ENCODE measurements at regions of chr1 and their contacts with region 1.

Region 1: DNA sequence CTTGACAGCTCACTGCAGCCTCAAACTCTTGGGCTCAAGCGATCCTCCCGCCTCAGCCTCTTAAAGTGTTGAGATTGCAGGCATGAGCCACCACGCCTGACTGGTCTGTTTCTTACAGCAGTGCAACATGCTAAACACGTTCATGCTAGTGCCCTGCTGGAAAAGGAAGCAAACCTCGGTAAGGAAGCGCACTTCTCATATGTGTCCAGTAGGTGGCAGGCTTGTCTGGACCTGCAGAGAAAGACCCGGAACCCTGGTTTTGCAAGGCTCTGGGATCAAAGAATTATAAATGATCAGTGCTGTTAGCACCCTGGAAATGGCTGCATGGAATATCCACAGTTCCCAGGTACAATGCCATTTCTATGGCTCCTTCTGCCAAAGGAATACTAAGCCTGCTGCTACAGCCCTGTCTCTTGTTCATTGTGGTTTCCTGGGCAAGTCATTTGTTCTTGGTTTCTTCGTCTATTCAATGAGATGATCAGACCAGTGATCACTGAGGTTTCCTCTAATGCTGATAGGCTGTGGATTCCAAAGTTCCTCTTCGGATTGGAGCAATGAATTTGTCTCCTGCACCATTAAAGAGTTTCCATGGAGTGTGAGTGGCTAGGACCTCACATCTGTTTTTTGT is 15.9 kb downstream of the RNU5D-1 start:
- DNase-seq: peak in 1 of 2 experiments; percentile 82
- H3K4me3 ChIP-seq: no peak overlapping the region
- H3K27ac ChIP-seq: no peak overlapping the region
- H3K4me1 ChIP-seq: no peaks in the 10 kb centered on the region
- H3K27me3 ChIP-seq: no peaks in the 10 kb centered on the region
- CTCF ChIP-seq: peak; percentile 81 to 97 (median 81)
- EP300 ChIP-seq: no peak
- POLR2A ChIP-seq: no peak
- RAD21 ChIP-seq: peak; percentile 69 to 79

Region 2: DNA sequence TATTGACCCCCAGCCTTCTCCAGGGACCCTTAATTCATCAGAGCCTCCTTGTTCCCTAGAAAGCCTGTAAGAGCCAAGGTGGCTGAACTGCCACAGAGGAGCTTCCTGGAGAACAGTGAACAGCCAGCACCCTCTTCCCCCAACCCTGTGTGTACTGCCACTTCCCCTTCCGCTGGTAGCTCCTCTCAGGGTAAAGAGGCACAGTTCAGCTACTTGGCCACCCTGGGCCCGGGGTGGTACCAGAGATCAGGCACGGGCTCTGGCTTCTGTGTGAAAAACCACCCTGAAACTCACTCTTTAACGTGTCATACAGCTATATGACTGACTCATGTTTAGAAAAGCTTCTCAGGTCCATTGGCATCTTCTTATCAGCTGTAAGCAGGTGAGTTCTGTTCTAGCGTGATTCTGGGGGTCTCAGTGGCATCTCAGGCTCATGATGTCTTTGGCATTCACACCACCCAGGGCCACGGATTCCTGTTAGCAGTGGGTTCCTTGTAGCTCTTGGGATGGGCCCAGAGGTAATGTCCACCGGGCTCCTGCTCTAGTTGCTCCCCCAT is 18.2 kb before region 1 on chr1:
- CTCF ChIA-PET with region 1: interaction called, 25 read pairs
- POLR2A ChIA-PET with region 1: no interaction called
- DNase-seq: no peak
- H3K4me3 ChIP-seq: no peak overlapping the region
- H3K27ac ChIP-seq: no peak overlapping the region
- H3K4me1 ChIP-seq: no peaks in the 10 kb centered on the region
- H3K27me3 ChIP-seq: no peaks in the 10 kb centered on the region
- CTCF ChIP-seq: no peak
- EP300 ChIP-seq: no peak
- POLR2A ChIP-seq: no peak
- RAD21 ChIP-seq: no peak

Region 3: GRCh38 chr1:44730741-44731512 is 15.9 kb after region 1 on chr1 and contains the start of gene RNU5D-1:
- CTCF ChIA-PET with region 1: interaction called, 107 read pairs
- POLR2A ChIA-PET with region 1: interaction called, 213 read pairs
- DNase-seq: peak in 1 of 2 experiments; percentile 94
- H3K4me3 ChIP-seq: peak within 1 kb of the TSS in 1 of 4 experiments; percentile 31; a peak in 1 of 8 replicates
- H3K27ac ChIP-seq: peak within 1 kb of the TSS; percentile 94
- H3K4me1 ChIP-seq: peaks cover 0 to 3% (median under 1%) of the 10 kb centered on the region in 4 experiments; a peak in 4 of 7 replicates
- H3K27me3 ChIP-seq: no peaks in the 10 kb centered on the region
- CTCF ChIP-seq: peak; percentile 48 to 80 (median 55)
- EP300 ChIP-seq: 0 out of 3 replicates have a peak, but pooled peaks of 1 of the 2 experiments have one; percentile 30
- POLR2A ChIP-seq: peak; percentile 99
- RAD21 ChIP-seq: peak; percentile 14 to 32; a peak in 1 of 4 replicates
- total RNA-seq, gene RNU5D-1: 17.4 TPM in 1 of 2 replicates, not detected in the other

Region 4: DNA sequence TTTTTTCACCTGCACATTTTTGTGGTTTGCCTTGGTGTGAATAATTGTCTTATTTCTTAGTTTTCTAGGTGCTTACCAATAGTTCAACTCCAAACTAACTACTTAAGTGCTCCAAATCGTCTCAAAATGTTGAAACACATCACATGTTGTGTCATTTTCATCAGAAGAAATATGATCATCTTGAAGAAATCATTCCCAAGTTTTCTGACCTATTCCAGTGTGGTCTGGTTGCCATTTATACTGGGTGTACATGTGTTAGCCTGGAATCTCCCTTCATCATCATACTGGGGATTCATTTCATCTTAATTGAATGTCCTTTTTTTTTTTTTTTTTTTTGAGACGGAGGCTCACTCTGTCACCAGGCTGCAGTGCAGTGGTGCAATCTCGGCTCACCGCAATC is 204.3 kb after region 1 on chr1:
- CTCF ChIA-PET with region 1: no interaction called
- POLR2A ChIA-PET with region 1: no interaction called
- DNase-seq: no peak
- H3K4me3 ChIP-seq: no peak overlapping the region
- H3K27ac ChIP-seq: no peak overlapping the region
- H3K4me1 ChIP-seq: no peaks in the 10 kb centered on the region
- H3K27me3 ChIP-seq: no peaks in the 10 kb centered on the region
- CTCF ChIP-seq: no peak
- EP300 ChIP-seq: no peak
- POLR2A ChIP-seq: no peak
- RAD21 ChIP-seq: no peak